MCF 10A (cell line): ENCODE measurements at regions of chr3 and their contacts with region 1.

Region 1: GRCh38 chr3:31448035-31448881 is 84.5 kb upstream of the STT3B start:
- DNase-seq: peak; percentile 47
- H3K4me3 Mint-ChIP-seq: no peak overlapping the region
- H3K27ac Mint-ChIP-seq: no peak overlapping the region
- H3K4me1 Mint-ChIP-seq: no peaks in the 10 kb centered on the region
- H3K27me3 Mint-ChIP-seq: peaks cover 2% of the 10 kb centered on the region
- CTCF ChIP-seq: peak; percentile 48

Region 2: DNA sequence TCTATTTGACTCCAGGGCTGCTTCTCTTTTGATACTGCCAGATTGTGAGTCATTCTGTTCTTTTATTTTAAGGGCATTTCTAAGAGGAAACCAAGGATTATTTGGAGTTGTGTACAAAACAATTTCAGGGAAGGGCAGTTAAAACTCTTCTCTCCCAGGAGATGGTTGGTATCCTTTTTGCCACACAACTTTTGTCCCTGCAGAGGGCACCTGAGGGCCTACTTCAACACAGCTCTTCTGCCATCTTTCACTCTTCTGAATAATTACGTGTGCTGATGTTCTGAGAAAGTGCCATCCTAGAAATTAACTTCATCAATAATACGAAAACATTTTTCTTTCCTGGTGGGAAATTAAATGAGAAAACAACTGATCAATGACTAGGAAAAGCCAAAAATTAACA is 478.1 kb before region 1 on chr3:
- CTCF ChIA-PET with region 1: no interaction called
- POLR2A ChIA-PET with region 1: no interaction called
- intact Hi-C with region 1: loop called (anchors 10 kb)
- DNase-seq: peak; percentile 60
- H3K4me3 Mint-ChIP-seq: no peak overlapping the region
- H3K27ac Mint-ChIP-seq: no peak overlapping the region
- H3K4me1 Mint-ChIP-seq: peaks cover 6% of the 10 kb centered on the region
- H3K27me3 Mint-ChIP-seq: no peaks in the 10 kb centered on the region
- CTCF ChIP-seq: peak; percentile 40